GM12878 (cell line): ENCODE measurements at regions of chr10 and their contacts with region 1.

Region 1: DNA sequence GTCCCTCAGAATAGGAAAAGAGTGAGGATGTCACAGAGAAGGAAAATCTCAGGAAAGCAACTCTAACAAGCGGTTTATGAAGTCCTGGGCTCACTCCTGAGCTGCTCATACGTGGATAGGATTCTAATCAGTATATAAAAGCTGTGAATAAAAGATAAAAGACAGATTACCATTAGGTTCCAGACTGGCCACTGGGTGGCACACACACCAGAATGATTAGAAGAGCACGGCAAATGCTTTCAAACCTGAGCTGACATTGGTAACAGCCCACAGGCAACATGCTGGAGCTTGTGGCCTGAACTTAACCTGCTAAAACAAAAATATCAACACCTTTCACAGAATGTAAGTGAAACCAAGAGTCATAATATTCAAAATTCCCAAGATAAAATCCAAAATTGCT is 370.8 kb downstream of the GRID1 start:
- DNase-seq: peak; percentile 20
- ATAC-seq: peak; percentile 83
- H3K4me3 ChIP-seq: no peak overlapping the region
- H3K27ac ChIP-seq: no peak overlapping the region
- H3K4me1 ChIP-seq: no peaks in the 10 kb centered on the region
- H3K27me3 ChIP-seq: 0 out of 4 replicates have a peak, but pooled peaks cover 0 to 2% of the 10 kb centered on the region in 2 experiments
- CTCF ChIP-seq: peak; percentile 43 to 64 (median 49); a peak in 5 of 6 replicates
- EP300 ChIP-seq: no peak
- POLR2A ChIP-seq: no peak
- RAD21 ChIP-seq: peak; percentile 45

Region 2: DNA sequence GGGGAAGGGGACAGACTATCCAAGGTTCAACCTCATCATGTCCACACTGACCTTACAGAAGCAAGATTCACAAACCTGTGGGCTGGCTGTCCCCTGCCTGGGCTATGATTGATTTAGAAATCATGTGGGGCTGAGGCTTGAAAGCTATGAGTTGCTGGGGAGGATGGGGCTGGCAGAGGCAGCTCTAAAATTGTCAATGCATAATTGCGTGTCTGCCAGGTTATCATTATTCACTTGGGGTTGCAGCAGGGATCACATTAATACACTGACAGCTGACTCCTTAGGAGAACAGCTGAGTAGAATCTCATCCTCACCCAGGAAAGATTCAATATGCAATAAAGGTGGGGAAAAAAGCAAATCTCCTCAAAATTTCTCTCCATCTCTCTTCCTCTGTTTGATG is 801.1 kb before region 1 on chr10:
- CTCF ChIA-PET with region 1: no interaction called
- POLR2A ChIA-PET with region 1: no interaction called
- RAD21 ChIA-PET with region 1: no interaction called
- SMC1A ChIA-PET with region 1: no interaction called
- in situ Hi-C with region 1: no loop called
- intact Hi-C with region 1: no loop called
- DNase-seq: no peak
- ATAC-seq: no peak
- H3K4me3 ChIP-seq: no peak overlapping the region
- H3K27ac ChIP-seq: no peak overlapping the region
- H3K4me1 ChIP-seq: no peaks in the 10 kb centered on the region
- H3K27me3 ChIP-seq: no peaks in the 10 kb centered on the region; a peak in 1 of 4 replicates
- CTCF ChIP-seq: no peak
- EP300 ChIP-seq: no peak
- POLR2A ChIP-seq: no peak
- RAD21 ChIP-seq: no peak

Region 3: DNA sequence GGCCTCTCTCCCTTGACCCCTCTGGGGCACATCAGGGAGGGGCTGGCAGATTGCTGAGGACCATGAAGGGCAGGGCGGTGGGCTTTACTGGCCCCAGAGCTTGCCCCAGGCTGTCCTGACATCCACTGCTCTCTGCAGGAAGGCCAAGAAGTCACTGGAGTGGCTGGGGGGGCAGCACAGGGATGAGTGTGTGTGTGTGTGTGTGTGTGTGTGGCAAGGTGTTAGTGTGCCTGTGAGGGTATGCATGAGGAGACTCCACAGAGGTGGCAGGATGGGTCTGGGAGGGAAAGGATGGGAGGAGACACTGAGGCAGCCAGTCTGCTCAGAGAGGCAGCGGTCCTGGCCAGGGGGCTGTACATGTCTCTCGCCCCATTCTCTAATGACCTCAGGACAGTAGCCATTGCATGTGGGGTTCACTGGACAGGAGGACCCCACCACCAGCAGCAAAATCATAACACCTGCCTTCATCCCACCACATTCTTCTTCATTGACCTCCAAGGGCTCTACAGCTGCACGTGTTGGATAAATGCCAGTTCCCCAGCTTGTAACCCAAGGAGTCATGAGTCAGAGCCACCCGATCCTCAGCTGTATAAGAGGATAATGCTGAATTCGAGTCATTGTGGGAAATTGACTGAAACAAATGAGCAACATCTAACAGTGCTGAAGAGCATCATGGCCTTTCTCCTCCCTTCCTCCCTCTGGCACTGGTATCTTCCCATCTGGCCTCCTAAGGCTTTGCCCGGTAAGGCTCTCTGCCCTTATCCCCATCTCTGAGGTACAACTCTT is 349.7 kb before region 1 on chr10:
- CTCF ChIA-PET with region 1: no interaction called
- POLR2A ChIA-PET with region 1: no interaction called
- RAD21 ChIA-PET with region 1: no interaction called
- SMC1A ChIA-PET with region 1: no interaction called
- in situ Hi-C with region 1: no loop called
- intact Hi-C with region 1: no loop called
- DNase-seq: no peak
- ATAC-seq: no peak
- H3K4me3 ChIP-seq: no peak overlapping the region
- H3K27ac ChIP-seq: no peak overlapping the region
- H3K4me1 ChIP-seq: no peaks in the 10 kb centered on the region
- H3K27me3 ChIP-seq: no peaks in the 10 kb centered on the region
- CTCF ChIP-seq: no peak
- EP300 ChIP-seq: no peak
- POLR2A ChIP-seq: no peak
- RAD21 ChIP-seq: no peak

Region 4: GRCh38 chr10:86139066-86139657 is 143.4 kb after region 1 on chr10:
- CTCF ChIA-PET with region 1: interaction called, 10 read pairs
- POLR2A ChIA-PET with region 1: no interaction called
- RAD21 ChIA-PET with region 1: interaction called, 6 read pairs
- SMC1A ChIA-PET with region 1: interaction called, 4 read pairs
- in situ Hi-C with region 1: no loop called
- intact Hi-C with region 1: no loop called
- DNase-seq: no peak
- ATAC-seq: peak; percentile 80
- H3K4me3 ChIP-seq: no peak overlapping the region
- H3K27ac ChIP-seq: no peak overlapping the region
- H3K4me1 ChIP-seq: no peaks in the 10 kb centered on the region
- H3K27me3 ChIP-seq: no peaks in the 10 kb centered on the region; a peak in 1 of 4 replicates
- CTCF ChIP-seq: peak; percentile 58 to 68 (median 63); a peak in 5 of 6 replicates
- EP300 ChIP-seq: no peak
- POLR2A ChIP-seq: no peak
- RAD21 ChIP-seq: peak; percentile 69

Region 5: DNA sequence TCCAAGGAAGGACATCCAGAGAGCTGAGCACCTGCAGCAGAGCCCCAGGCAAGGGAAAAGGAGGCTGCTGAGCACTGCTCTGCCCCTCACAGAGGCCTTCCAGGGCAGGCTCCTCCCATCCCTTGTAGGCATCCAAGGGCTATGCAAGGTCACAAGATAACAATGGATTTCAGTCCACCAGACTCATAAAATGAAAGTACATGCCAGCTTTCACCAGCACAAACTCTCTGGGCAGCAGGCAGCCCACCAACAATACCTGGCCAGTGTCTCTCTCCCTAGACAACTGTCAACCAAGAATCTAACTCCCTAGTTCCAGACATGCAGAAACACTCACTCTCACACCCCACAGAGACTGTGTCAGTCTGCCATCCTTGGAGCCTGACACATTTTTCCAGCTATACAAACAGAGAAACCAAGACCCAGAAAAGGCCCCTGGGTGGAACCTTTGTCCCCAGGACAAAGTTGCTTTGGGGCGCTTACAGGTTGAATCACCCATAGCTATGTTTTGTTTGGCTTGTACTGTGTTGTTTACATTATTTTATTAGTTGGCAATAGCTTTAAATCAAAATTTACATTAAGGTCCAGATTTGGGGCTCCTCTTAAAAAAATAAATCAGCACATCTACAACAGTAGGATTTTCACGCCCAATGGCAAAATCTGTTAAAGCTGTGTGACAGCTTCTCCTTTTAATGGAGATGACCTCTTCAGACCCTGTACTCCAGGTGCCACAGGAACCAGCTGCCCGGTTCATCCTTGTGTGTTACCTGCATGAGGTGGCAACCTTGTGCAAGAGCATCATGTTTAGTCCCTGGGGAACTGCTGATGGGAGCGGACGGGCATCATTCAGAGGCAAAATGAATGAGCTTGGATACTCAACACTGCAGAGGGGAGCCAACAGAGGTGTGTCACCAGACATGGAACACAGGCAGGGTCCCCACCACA is 365.6 kb after region 1 on chr10:
- CTCF ChIA-PET with region 1: interaction called, 10 read pairs
- POLR2A ChIA-PET with region 1: no interaction called
- RAD21 ChIA-PET with region 1: interaction called, 3 read pairs
- SMC1A ChIA-PET with region 1: no interaction called
- in situ Hi-C with region 1: no loop called
- intact Hi-C with region 1: no loop called
- DNase-seq: no peak
- ATAC-seq: no peak
- H3K4me3 ChIP-seq: no peak overlapping the region
- H3K27ac ChIP-seq: no peak overlapping the region
- H3K4me1 ChIP-seq: no peaks in the 10 kb centered on the region
- H3K27me3 ChIP-seq: peaks cover 20 to 32% of the 10 kb centered on the region in 2 experiments
- CTCF ChIP-seq: no peak
- EP300 ChIP-seq: no peak
- POLR2A ChIP-seq: no peak
- RAD21 ChIP-seq: no peak